ENCODE measurements at regions of chr1 and their contacts with region 1.

Region 1: DNA sequence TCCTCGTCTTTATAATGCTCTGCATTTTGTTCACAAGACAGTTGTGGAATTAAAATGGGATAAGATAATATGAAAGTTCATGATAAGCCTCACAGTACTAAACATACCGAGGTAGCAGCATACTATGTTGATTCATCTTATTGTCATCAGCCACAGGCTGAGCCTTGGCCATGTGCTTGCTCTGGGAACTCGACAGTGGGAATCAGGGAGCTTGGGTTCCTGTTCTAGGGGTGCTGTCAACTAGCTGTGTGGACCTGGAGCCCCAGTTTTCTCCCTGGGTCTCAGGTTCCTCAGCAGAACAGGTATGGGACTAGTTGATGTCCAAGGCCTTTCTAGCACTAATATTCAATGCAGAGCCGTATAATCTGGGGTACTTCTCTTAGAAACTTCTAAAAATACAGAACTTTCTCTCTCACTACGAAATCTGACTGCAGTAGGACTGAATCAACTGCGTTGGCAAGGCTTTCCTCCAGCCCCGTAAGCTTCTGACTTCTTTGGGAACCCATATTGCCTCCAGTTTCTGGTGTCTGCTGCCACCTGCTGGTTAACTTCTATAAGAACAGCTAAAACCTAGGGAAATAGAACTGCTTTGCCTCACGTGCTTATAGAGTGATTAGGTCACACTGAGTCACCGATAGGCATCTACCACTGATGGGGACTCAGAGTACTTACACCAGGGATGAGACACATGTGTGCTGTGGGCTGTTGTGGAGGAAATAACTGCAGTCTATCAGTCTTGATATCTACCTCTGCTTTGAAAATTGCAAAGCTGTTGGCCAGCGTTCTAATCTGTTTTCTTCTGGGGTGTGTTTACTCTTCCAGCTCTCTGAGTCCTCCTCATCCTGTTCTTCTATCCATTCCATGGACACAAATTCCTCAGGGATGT is 110.9 kb downstream of the RGL1 start:
- DNase-seq: peak; percentile 97
- H3K4me3 ChIP-seq: peak overlapping the region; percentile 11; the same call in 1 of the 2 replicates
- H3K27ac ChIP-seq: peak overlapping the region; percentile 74
- H3K27me3 ChIP-seq: no peaks in the 10 kb centered on the region
- CTCF ChIP-seq: peak; percentile 85

Region 2: GRCh38 chr1:183609313-183609712 is 306.6 kb before region 1 on chr1:
- CTCF ChIA-PET with region 1: interaction called, 12 read pairs
- POLR2A ChIA-PET with region 1: no interaction called
- DNase-seq: no peak
- H3K4me3 ChIP-seq: no peak overlapping the region
- H3K27ac ChIP-seq: peak overlapping the region; percentile 83
- H3K27me3 ChIP-seq: no peaks in the 10 kb centered on the region
- CTCF ChIP-seq: peak; percentile 66

Region 3: GRCh38 chr1:183646776-183647175 is 269.1 kb before region 1 on chr1:
- CTCF ChIA-PET with region 1: interaction called, 15 read pairs
- POLR2A ChIA-PET with region 1: no interaction called
- DNase-seq: no peak
- H3K4me3 ChIP-seq: no peak overlapping the region
- H3K27ac ChIP-seq: no peak overlapping the region
- H3K27me3 ChIP-seq: no peaks in the 10 kb centered on the region
- CTCF ChIP-seq: no peak

Region 4: GRCh38 chr1:183685112-183685713 is 230.7 kb before region 1 on chr1:
- CTCF ChIA-PET with region 1: interaction called, 59 read pairs
- POLR2A ChIA-PET with region 1: no interaction called
- DNase-seq: no peak
- H3K4me3 ChIP-seq: no peak overlapping the region
- H3K27ac ChIP-seq: no peak overlapping the region
- H3K27me3 ChIP-seq: no peaks in the 10 kb centered on the region
- CTCF ChIP-seq: peak; percentile 71

Region 5: GRCh38 chr1:183932412-183932811 is 16.5 kb after region 1 on chr1:
- CTCF ChIA-PET with region 1: interaction called, 17 read pairs
- POLR2A ChIA-PET with region 1: no interaction called
- DNase-seq: peak; percentile 78
- H3K4me3 ChIP-seq: no peak overlapping the region
- H3K27ac ChIP-seq: no peak overlapping the region
- H3K27me3 ChIP-seq: no peaks in the 10 kb centered on the region
- CTCF ChIP-seq: no peak

Measured in AG04450 (cell line).